HEK293 (cell line): ENCODE measurements at regions of chr11 and their contacts with region 1.

Region 1: DNA sequence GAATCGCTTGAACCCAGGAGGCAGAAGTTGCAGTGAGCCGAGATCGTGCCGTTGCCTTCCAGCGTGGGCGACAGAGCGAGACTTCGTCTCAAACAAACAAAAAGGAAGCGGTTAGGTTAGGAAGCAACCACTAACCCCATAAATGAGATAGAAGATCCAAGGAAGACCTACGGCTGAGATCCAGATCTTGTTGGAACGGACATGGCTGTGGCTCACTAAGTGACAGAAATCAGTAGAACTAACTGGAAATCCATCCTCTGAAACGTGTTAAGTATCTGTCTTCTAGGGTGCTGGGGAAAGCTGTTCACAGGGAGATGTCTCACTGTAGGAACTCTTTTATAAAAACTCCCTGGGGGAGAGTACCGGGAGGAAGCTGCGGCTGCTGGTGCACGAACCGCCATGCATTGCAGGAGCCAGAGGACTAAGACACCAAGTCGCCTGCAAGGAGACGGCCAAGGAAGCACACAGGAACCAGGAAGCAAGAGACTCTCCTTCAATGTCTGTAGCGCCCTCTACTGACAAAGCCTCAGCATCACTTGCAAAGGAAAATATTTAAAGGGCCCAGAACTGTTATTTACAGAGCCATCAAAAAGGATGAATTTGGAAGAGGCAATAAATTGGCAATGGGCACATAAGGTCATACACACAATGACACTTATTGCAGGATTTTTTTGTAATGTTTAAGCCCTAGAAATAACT is 16.9 kb upstream of the SPTY2D1 start:
- H3K4me3 ChIP-seq: no peak overlapping the region
- H3K27ac ChIP-seq: no peak overlapping the region
- H3K4me1 ChIP-seq: no peaks in the 10 kb centered on the region
- CTCF ChIP-seq: peak; percentile 41; the same call in 1 of the 2 replicates

Region 2: GRCh38 chr11:18081551-18081950 is 569.5 kb before region 1 on chr11:
- CTCF ChIA-PET with region 1: no interaction called
- POLR2A ChIA-PET with region 1: no interaction called
- H3K4me3 ChIP-seq: no peak overlapping the region
- H3K27ac ChIP-seq: no peak overlapping the region
- H3K4me1 ChIP-seq: no peaks in the 10 kb centered on the region; the same call in 1 of the 2 replicates
- CTCF ChIP-seq: no peak

Region 3: GRCh38 chr11:18115360-18116127 is 535.5 kb before region 1 on chr11:
- CTCF ChIA-PET with region 1: interaction called, 13 read pairs
- POLR2A ChIA-PET with region 1: no interaction called
- H3K4me3 ChIP-seq: no peak overlapping the region
- H3K27ac ChIP-seq: no peak overlapping the region
- H3K4me1 ChIP-seq: no peaks in the 10 kb centered on the region
- CTCF ChIP-seq: peak; percentile 26; the same call in 1 of the 2 replicates

Region 4: GRCh38 chr11:18540207-18541009 is 110.6 kb before region 1 on chr11:
- CTCF ChIA-PET with region 1: interaction called, 12 read pairs
- POLR2A ChIA-PET with region 1: no interaction called
- H3K4me3 ChIP-seq: no peak overlapping the region
- H3K27ac ChIP-seq: no peak overlapping the region
- H3K4me1 ChIP-seq: no peaks in the 10 kb centered on the region
- CTCF ChIP-seq: no peak

Region 5: DNA sequence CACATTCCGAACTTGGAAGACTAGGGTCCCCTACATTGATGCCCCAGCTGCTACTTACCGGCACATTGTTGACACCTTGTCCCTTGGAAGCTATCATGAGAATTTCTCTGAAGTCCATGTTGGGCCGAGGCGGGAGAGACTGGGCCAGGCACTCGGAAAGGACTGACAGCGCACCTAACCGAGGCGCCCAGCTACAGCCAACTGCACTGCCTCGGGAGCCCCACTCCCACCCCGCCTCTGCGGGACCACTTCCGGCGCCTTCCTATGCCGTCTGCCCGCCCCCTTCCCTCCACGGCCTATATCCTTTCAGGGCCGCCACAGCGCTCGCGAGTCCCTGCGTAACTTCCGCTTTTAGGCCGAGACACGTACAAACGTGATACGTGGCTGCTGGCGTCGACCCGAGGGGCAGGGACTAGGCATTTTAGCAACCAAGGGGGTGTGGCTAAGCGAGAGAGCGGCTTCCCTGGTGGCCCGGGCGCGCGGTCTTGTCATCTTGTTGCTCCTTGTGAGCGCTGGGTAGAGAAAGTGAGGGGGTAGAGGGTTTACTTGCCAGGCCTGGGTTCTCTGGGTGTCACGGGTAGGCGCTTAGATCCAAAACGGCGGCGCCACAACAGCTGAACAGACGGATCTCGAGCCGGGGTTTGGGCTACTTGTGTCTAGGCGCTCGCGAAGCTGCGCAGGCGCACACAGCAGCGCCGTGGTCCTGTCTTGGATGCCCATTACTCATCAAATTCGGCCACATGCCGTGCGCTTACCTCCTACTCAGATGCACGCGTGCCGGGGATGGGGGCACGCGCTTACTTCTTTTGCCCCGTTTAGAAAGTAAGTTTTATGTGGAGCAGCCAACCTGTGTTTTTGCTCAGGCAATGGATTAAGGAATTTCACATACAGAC is 16.6 kb before region 1 on chr11 and contains the start of gene SPTY2D1:
- CTCF ChIA-PET with region 1: interaction called, 24 read pairs
- POLR2A ChIA-PET with region 1: interaction called, 4 read pairs
- H3K4me3 ChIP-seq: peak within 1 kb of the TSS; percentile 91
- H3K27ac ChIP-seq: peak within 1 kb of the TSS; percentile 73
- H3K4me1 ChIP-seq: no peaks in the 10 kb centered on the region
- CTCF ChIP-seq: no peak